PC-3 (cell line): ENCODE measurements at regions of chr1 and their contacts with region 1.

Region 1: GRCh38 chr1:150010393-150011115 is at the start of gene OTUD7B:
- DNase-seq: peak; percentile 94
- ATAC-seq: peak; percentile 66
- H3K4me3 ChIP-seq: peak within 1 kb of the TSS; percentile 99
- H3K27ac ChIP-seq: peak within 1 kb of the TSS; percentile 84
- H3K4me1 ChIP-seq: peaks cover 41% of the 10 kb centered on the region
- H3K27me3 ChIP-seq: no peaks in the 10 kb centered on the region
- CTCF ChIP-seq: no peak
- total RNA-seq, gene OTUD7B: 11.5 and 14.6 TPM in 2 replicates

Region 2: DNA sequence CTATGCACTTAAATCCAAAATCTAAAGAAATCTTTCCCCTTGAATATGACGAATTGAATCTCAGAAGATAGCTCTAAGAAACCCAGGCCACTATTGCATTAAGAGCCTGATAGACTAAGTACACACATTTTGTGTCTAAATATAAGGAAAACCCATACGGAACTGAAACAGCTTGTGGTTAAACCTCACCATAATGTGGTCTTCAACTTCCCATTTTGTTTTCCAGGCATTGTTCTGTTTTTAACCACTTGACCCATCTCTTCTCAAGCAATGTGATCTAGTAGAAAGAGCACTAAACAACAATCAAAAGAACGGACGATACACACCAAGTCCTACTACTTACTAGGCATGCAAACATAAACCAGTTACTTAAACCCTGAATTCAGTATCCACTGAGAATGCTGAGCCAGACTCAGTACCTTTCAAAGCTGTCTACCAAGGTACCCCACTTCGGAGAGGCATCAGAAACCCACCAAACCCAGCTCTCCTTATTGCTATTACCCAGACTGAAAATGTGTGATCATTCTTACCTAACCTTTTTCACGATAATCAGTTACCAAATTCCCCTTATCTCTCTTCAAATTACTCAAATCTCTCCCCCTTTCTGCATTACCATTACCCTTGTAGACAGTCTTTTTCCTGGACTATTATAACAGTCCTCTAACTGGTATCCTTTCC is 12.8 kb before region 1 on chr1:
- CTCF ChIA-PET with region 1: no interaction called
- POLR2A ChIA-PET with region 1: no interaction called
- intact Hi-C with region 1: loop called (anchors 2 kb)
- DNase-seq: no peak
- ATAC-seq: no peak
- H3K4me3 ChIP-seq: no peak overlapping the region
- H3K27ac ChIP-seq: no peak overlapping the region; the same call in 1 of the 2 replicates
- H3K4me1 ChIP-seq: peaks cover 35% of the 10 kb centered on the region
- H3K27me3 ChIP-seq: no peaks in the 10 kb centered on the region
- CTCF ChIP-seq: no peak